ENCODE measurements at regions of chr9 and their contacts with region 1.

Region 1: GRCh38 chr9:77020438-77021290 is 1.2 kb downstream of the FOXB2 start:
- DNase-seq: no peak
- H3K4me3 ChIP-seq: no peak overlapping the region
- H3K27ac ChIP-seq: no peak overlapping the region
- H3K4me1 ChIP-seq: peaks cover 18% of the 10 kb centered on the region
- H3K27me3 ChIP-seq: peaks cover 99% of the 10 kb centered on the region
- CTCF ChIP-seq: no peak

Region 2: GRCh38 chr9:76704593-76705204 is 316.0 kb before region 1 on chr9:
- CTCF ChIA-PET with region 1: no interaction called
- POLR2A ChIA-PET with region 1: no interaction called
- intact Hi-C with region 1: no loop called
- DNase-seq: peak; percentile 80
- H3K4me3 ChIP-seq: no peak overlapping the region
- H3K27ac ChIP-seq: no peak overlapping the region
- H3K4me1 ChIP-seq: no peaks in the 10 kb centered on the region
- H3K27me3 ChIP-seq: peaks cover 58% of the 10 kb centered on the region
- CTCF ChIP-seq: peak; percentile 63

Region 3: GRCh38 chr9:76964607-76965006 is 56.1 kb before region 1 on chr9:
- CTCF ChIA-PET with region 1: no interaction called
- POLR2A ChIA-PET with region 1: no interaction called
- intact Hi-C with region 1: no loop called
- DNase-seq: no peak
- H3K4me3 ChIP-seq: no peak overlapping the region
- H3K27ac ChIP-seq: no peak overlapping the region
- H3K4me1 ChIP-seq: no peaks in the 10 kb centered on the region
- H3K27me3 ChIP-seq: peaks cover 27% of the 10 kb centered on the region
- CTCF ChIP-seq: no peak

Region 4: GRCh38 chr9:77092536-77092935 is 71.9 kb after region 1 on chr9:
- CTCF ChIA-PET with region 1: no interaction called
- POLR2A ChIA-PET with region 1: no interaction called
- intact Hi-C with region 1: loop called (anchors 10 kb)
- DNase-seq: peak; percentile 7
- H3K4me3 ChIP-seq: no peak overlapping the region
- H3K27ac ChIP-seq: no peak overlapping the region
- H3K4me1 ChIP-seq: peaks cover under 1% of the 10 kb centered on the region
- H3K27me3 ChIP-seq: peaks cover 7% of the 10 kb centered on the region
- CTCF ChIP-seq: no peak